ENCODE measurements at regions of chr15 and their contacts with region 1.

Region 1: GRCh38 chr15:67101911-67102598 is 36.7 kb downstream of the SMAD3 start:
- DNase-seq: peak in 1 of 9 donors; percentile 51
- ATAC-seq: peak; percentile 62
- H3K4me3 ChIP-seq: peak overlapping the region; percentile 15
- H3K4me3 Mint-ChIP-seq: no peak overlapping the region
- H3K27ac ChIP-seq: peak overlapping the region; percentile 61
- H3K27ac Mint-ChIP-seq: no peak overlapping the region
- H3K4me1 ChIP-seq: peaks cover 92 to 95% of the 10 kb centered on the region in 2 donors
- H3K4me1 Mint-ChIP-seq: peaks cover 26 to 64% (median 27%) of the 10 kb centered on the region in 7 donors
- H3K27me3 ChIP-seq: no peaks in the 10 kb centered on the region
- H3K27me3 Mint-ChIP-seq: no peaks in the 10 kb centered on the region

Region 2: DNA sequence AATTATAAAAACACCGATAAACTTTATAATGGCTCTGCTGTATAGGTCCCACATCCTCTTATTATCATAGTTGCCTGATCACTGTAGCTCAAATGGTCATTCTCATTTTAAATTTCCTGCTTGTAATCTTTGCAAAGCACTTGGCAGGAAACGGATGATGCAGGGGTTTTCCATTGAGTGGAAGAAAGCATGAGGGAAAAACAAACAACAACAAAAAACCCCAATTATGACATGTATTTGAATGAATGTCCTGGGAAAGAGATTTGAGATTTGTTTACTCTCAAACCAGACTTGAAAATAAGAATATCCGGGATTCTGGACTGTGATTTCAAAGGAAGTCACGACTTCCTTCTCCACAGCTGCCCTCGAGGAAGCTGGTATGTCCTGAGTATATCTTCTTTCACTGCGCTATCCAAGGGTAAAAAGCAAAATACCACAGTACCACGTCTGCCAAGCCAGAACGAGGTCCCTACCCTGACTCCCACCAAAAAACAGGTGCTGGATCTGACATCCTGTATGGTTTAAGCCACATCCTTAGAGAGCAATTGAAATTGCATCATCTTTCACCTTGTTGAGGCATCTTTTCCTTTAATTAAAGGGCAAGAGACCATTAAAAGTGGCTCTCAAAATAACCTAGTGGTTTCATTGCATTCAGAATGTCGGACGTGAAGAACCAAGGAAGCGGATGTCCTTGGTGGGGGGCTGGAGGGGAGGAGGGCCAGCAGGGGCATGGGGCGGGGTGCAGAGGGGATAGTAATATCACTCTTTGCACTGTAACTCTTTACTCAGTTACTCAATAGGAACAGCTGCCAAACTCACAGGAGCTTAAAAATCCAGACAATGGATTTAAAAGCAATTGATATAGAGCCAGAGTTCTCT is 732.0 kb before region 1 on chr15:
- CTCF ChIA-PET with region 1: no interaction called
- POLR2A ChIA-PET with region 1: no interaction called
- intact Hi-C with region 1: no loop called
- DNase-seq: peak in 1 of 9 donors; percentile 29
- ATAC-seq: peak; percentile 50
- H3K4me3 ChIP-seq: peak overlapping the region; percentile 48
- H3K4me3 Mint-ChIP-seq: peak overlapping the region; percentile 3 to 87 (median 80)
- H3K27ac ChIP-seq: peak overlapping the region; percentile 52
- H3K27ac Mint-ChIP-seq: peak overlapping the region; percentile 53 to 93 (median 84)
- H3K4me1 ChIP-seq: peaks cover 7 to 11% of the 10 kb centered on the region in 2 donors
- H3K4me1 Mint-ChIP-seq: peaks cover 10 to 22% (median 15%) of the 10 kb centered on the region in 7 donors
- H3K27me3 ChIP-seq: no peaks in the 10 kb centered on the region
- H3K27me3 Mint-ChIP-seq: no peaks in the 10 kb centered on the region

Region 3: GRCh38 chr15:66931768-66932633 is 170.1 kb before region 1 on chr15:
- CTCF ChIA-PET with region 1: no interaction called
- POLR2A ChIA-PET with region 1: no interaction called
- intact Hi-C with region 1: no loop called
- DNase-seq: no peak
- ATAC-seq: no peak
- H3K4me3 ChIP-seq: no peak overlapping the region
- H3K4me3 Mint-ChIP-seq: no peak overlapping the region
- H3K27ac ChIP-seq: no peak overlapping the region
- H3K27ac Mint-ChIP-seq: no peak overlapping the region
- H3K4me1 ChIP-seq: no peaks in the 10 kb centered on the region
- H3K4me1 Mint-ChIP-seq: peaks cover 0 to 4% (median 0%) of the 10 kb centered on the region in 7 donors
- H3K27me3 ChIP-seq: no peaks in the 10 kb centered on the region
- H3K27me3 Mint-ChIP-seq: peaks cover 13 to 21% (median 17%) of the 10 kb centered on the region in 5 donors

Region 4: DNA sequence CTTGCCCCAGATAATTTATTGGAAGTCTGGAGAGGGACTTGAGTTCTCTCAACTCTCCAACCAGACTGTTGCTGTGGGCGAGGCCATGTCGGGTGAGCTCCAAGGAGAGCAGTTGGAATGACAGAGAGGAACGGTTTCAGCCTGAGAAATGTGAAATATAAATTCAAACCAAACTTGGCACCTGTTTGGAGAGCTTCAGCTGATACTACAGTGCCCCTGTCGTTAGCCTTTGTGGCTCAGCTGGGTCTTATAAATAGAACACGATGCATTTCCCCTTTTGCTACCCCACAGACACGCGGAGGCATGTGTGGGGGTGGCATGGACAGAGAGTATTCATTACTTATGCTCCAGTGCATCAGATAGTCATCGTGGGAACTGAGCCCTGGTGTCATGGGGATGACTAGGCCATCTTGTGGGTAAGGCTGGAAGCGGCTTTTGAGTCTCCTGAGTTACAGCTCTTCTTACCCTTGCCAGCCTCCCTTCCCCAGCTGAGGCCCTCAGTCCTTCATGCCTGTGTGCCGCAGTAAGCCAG is 21.1 kb before region 1 on chr15:
- CTCF ChIA-PET with region 1: interaction called, 8 read pairs
- POLR2A ChIA-PET with region 1: interaction called, 14 read pairs
- intact Hi-C with region 1: loop called (anchors 1 kb)
- DNase-seq: peak in 1 of 9 donors; percentile 63
- ATAC-seq: peak; percentile 75
- H3K4me3 ChIP-seq: no peak overlapping the region
- H3K4me3 Mint-ChIP-seq: peak overlapping the region; percentile 6 to 98 (median 46)
- H3K27ac ChIP-seq: no peak overlapping the region
- H3K27ac Mint-ChIP-seq: peak overlapping the region; percentile 55 to 95 (median 81)
- H3K4me1 ChIP-seq: peaks cover 69 to 89% of the 10 kb centered on the region in 2 donors
- H3K4me1 Mint-ChIP-seq: peaks cover 56 to 96% (median 94%) of the 10 kb centered on the region in 7 donors
- H3K27me3 ChIP-seq: no peaks in the 10 kb centered on the region
- H3K27me3 Mint-ChIP-seq: no peaks in the 10 kb centered on the region

Region 5: DNA sequence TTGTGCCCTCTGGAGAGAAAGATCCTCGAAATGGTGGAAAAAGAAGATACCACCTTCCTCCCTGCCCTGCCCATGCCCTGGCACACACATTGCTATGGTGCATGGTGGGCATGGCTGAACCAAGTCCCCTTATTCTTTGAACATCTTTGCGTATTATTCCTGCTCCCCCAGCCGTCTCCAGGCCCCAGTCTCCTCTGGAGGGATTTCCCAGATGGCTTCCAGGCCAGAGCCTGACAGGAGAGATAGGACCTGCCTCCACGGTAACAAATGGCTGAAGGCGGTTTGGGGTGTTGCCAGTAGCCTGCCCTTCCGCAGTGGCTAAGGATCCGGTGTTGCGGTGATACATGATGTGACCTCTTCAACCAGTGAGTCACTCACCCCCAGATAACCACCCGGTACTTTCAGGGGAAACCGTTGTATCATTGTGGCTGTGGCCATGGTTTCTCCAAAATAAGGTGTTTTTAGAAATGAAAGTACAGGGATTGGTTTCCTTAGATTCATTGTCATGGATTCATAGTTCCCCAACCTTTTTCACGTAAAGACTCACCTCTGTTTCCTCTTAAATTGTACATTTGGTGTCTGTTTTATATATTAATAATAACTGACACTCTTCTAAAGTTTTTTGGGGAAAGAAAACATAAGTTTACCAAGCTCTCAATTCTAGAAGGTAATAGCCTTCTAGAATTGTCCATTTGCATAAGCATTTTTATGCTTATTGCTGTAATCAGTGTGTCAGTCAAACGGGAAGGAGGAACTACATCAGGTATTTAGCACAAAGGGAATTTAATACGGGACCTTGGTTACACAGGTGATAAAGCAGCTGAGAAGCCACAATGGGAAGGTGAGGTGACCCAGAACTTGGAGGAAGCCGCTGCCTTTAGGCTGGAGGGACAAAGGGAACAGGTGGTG is 10.7 kb before region 1 on chr15:
- CTCF ChIA-PET with region 1: no interaction called
- POLR2A ChIA-PET with region 1: interaction called, 15 read pairs
- intact Hi-C with region 1: loop called (anchors 1 kb)
- DNase-seq: peak in 2 of 9 donors; percentile 31 to 79
- ATAC-seq: peak; percentile 89
- H3K4me3 ChIP-seq: no peak overlapping the region
- H3K4me3 Mint-ChIP-seq: peak overlapping the region in 2 of 10 donors; percentile 10 to 89
- H3K27ac ChIP-seq: no peak overlapping the region
- H3K27ac Mint-ChIP-seq: peak overlapping the region in 3 of 9 donors; percentile 41 to 96 (median 62)
- H3K4me1 ChIP-seq: peaks cover 38 to 73% of the 10 kb centered on the region in 2 donors
- H3K4me1 Mint-ChIP-seq: peaks cover 41 to 99% (median 75%) of the 10 kb centered on the region in 7 donors
- H3K27me3 ChIP-seq: no peaks in the 10 kb centered on the region
- H3K27me3 Mint-ChIP-seq: no peaks in the 10 kb centered on the region

Region 6: GRCh38 chr15:67134067-67134838 is 32.2 kb after region 1 on chr15:
- CTCF ChIA-PET with region 1: no interaction called
- POLR2A ChIA-PET with region 1: interaction called, 3 read pairs
- intact Hi-C with region 1: loop called (anchors 1 kb)
- DNase-seq: peak; percentile 29 to 82 (median 78)
- ATAC-seq: peak; percentile 97
- H3K4me3 ChIP-seq: peak overlapping the region; percentile 41
- H3K4me3 Mint-ChIP-seq: peak overlapping the region; percentile 77 to 95 (median 85)
- H3K27ac ChIP-seq: peak overlapping the region; percentile 91
- H3K27ac Mint-ChIP-seq: peak overlapping the region; percentile 96 to 100 (median 98)
- H3K4me1 ChIP-seq: peaks cover 46 to 72% of the 10 kb centered on the region in 2 donors
- H3K4me1 Mint-ChIP-seq: peaks cover 41 to 93% (median 88%) of the 10 kb centered on the region in 7 donors
- H3K27me3 ChIP-seq: no peaks in the 10 kb centered on the region
- H3K27me3 Mint-ChIP-seq: no peaks in the 10 kb centered on the region

Region 7: GRCh38 chr15:67680645-67681044 is 578.6 kb after region 1 on chr15:
- CTCF ChIA-PET with region 1: no interaction called
- POLR2A ChIA-PET with region 1: no interaction called
- intact Hi-C with region 1: no loop called
- DNase-seq: no peak
- ATAC-seq: no peak
- H3K4me3 ChIP-seq: no peak overlapping the region
- H3K4me3 Mint-ChIP-seq: no peak overlapping the region
- H3K27ac ChIP-seq: no peak overlapping the region
- H3K27ac Mint-ChIP-seq: no peak overlapping the region
- H3K4me1 ChIP-seq: no peaks in the 10 kb centered on the region
- H3K4me1 Mint-ChIP-seq: peaks cover 0 to 4% (median 0%) of the 10 kb centered on the region in 7 donors
- H3K27me3 ChIP-seq: no peaks in the 10 kb centered on the region
- H3K27me3 Mint-ChIP-seq: no peaks in the 10 kb centered on the region